ENCODE measurements at regions of chr6 and their contacts with region 1.

Region 1: DNA sequence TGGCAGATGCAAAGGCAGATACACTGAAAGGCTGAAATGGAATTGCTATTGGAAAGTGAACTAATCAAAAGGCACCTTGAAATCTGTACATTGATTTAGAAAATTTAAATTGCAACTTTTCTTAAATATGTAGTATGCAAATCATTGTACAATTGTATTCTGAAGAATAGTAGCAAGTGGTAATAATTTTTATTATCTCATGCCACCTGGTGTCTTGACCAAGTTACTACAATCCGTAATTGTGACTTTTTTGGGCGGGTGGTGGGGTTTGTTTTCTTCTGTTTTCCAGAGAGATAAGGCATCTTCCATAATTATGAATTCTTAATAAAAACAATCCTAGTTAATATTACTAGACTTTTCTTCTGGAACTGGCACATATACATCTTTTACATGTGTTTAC is 12.5 kb upstream of the BCKDHB start:
- DNase-seq: no peak
- H3K4me3 ChIP-seq: no peak overlapping the region
- H3K27ac ChIP-seq: no peak overlapping the region
- H3K4me1 ChIP-seq: no peaks in the 10 kb centered on the region
- H3K27me3 ChIP-seq: no peaks in the 10 kb centered on the region
- CTCF ChIP-seq: no peak

Region 2: GRCh38 chr6:79777713-79778579 is 316.1 kb before region 1 on chr6:
- intact Hi-C with region 1: loop called (anchors 5 kb)
- DNase-seq: peak; percentile 79
- H3K4me3 ChIP-seq: peak overlapping the region; percentile 19
- H3K27ac ChIP-seq: no peak overlapping the region
- H3K4me1 ChIP-seq: no peaks in the 10 kb centered on the region
- H3K27me3 ChIP-seq: no peaks in the 10 kb centered on the region
- CTCF ChIP-seq: peak; percentile 99

Region 3: GRCh38 chr6:79954849-79955248 is 139.2 kb before region 1 on chr6:
- intact Hi-C with region 1: loop called (anchors 5 kb)
- DNase-seq: no peak
- H3K4me3 ChIP-seq: no peak overlapping the region
- H3K27ac ChIP-seq: no peak overlapping the region
- H3K4me1 ChIP-seq: no peaks in the 10 kb centered on the region
- H3K27me3 ChIP-seq: no peaks in the 10 kb centered on the region
- CTCF ChIP-seq: no peak

Measured in colonic mucosa (tissue), 4 donors.